ENCODE measurements at regions of chr3 and their contacts with region 1.

Region 1: DNA sequence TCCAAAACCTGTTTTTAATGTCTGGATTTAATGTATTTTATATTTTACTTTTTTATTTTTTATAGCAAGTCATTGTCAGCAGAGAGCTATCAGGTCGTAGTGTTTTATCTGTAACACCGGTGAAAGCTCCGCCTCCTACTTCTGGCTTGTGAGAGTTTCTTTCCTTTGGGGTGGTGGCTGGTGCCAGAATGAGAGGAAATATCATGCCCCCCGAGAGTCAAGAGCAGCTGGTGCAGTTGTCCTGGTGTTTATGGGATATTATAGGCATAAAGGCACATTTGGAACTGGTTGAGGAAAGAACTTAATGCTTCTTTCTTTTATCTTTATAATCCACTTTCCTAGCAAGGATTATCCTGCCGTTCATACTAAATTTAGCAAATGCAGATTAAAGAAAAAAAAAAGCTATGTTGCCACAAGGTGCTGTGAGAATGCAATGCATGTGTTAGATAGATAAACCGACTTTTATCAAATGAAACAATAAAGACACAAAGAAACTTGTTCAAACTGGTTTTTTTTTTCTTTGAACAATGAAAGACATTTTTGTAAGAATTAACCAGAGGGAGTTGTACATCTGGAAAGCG is 260.1 kb upstream of the PLSCR5 start:
- DNase-seq: no peak
- H3K4me3 ChIP-seq: no peak overlapping the region
- H3K27me3 ChIP-seq: no peaks in the 10 kb centered on the region
- CTCF ChIP-seq: no peak

Region 2: DNA sequence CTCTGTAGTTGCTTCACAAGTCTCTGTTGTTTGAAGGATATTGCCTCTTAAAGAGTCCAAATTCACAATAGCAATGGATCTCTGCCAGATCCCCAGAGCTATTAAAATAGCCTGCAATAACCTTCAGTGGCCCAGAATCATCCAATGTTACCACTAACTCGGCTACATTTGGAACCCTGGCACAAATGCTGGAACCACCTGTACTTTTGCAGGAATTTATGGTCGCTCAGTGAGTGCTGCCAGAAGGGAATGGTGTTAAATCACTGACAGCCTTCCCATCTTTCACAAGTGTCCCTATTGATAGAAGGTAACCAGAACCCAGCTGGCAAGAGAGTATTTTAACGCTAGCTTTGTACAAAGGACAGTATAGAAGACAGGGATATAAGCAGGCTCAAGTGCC is 38.7 kb after region 1 on chr3:
- CTCF ChIA-PET with region 1: no interaction called
- POLR2A ChIA-PET with region 1: interaction called, 10 read pairs
- DNase-seq: no peak
- H3K4me3 ChIP-seq: no peak overlapping the region
- H3K27me3 ChIP-seq: no peaks in the 10 kb centered on the region
- CTCF ChIP-seq: no peak

Region 3: DNA sequence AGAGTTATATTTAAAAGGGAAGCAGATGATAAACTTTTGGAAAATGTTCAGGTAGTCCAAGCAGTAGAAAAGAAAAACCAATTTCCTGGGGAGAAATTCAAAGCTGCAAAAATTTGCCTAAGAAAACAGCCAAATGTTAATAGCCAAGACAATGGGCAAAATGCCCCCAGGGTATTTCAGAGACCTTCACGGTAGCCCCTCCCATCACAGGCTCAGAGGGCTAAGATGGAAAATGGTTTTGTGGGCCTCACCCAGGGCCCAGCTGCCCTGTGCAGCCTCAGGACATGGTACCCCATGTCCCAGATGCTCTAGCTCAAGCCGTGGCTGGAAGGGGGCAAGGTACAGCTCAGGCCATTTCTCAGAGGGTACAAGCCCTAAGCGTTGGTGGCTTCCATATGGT is 150.1 kb after region 1 on chr3:
- CTCF ChIA-PET with region 1: no interaction called
- POLR2A ChIA-PET with region 1: no interaction called
- DNase-seq: no peak
- H3K4me3 ChIP-seq: no peak overlapping the region
- H3K27me3 ChIP-seq: no peaks in the 10 kb centered on the region
- CTCF ChIP-seq: no peak

Measured in BJ (cell line).